ENCODE measurements at regions of chr10 and their contacts with region 1.

Region 1: GRCh38 chr10:89414146-89414878 is at the start of gene IFIT5:
- DNase-seq: peak; percentile 58
- ATAC-seq: peak; percentile 84
- H3K4me3 ChIP-seq: peak within 1 kb of the TSS; percentile 79
- H3K27ac ChIP-seq: peak within 1 kb of the TSS; percentile 97
- H3K4me1 ChIP-seq: no peaks in the 10 kb centered on the region
- H3K27me3 ChIP-seq: no peaks in the 10 kb centered on the region
- CTCF ChIP-seq: no peak
- EP300 ChIP-seq: no peak
- POLR2A ChIP-seq: peak; percentile 57
- RAD21 ChIP-seq: no peak
- polyA plus RNA-seq, gene IFIT5: 5.9 to 8.3 TPM

Region 2: DNA sequence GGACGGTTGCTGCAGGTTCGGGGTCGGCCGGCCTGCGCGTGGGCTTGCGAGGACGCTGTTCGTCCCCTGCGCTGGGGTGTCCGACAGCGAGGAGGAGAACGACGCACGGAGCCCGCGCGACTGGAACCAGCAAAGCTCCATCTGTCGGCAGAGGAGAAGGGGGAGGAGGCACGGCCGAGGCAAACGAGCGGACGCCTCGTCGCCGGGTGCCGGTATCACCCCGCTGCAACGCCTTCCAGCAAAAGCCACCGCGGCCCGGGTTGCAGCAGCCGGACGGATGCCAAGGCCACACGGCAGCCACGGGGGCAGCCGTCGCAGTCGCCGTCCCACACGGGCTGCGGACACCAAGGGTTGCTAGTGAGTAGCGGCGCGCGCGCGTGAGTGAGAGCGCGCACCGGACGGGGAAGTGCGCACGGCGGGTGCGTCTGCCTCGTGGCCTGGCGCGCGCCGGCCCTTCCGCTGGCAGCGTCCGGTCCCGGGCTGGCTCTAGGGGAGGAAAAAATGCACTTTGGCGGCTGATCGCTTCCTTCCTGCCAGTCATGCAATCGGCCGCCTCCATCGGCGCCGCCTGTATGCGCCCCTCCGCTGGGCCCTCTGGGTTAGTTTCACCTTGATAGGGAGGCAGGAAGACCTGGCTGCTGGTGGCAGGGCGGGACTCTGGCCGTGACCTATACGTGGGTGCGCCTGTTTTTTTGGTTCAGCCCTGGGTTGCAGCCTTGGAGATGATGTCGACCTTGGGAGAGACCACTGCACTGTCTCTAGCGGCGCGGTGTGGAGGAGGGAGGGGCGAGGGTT is 533.8 kb before region 1 on chr10:
- CTCF ChIA-PET with region 1: no interaction called
- POLR2A ChIA-PET with region 1: no interaction called
- RAD21 ChIA-PET with region 1: no interaction called
- SMC1A ChIA-PET with region 1: no interaction called
- in situ Hi-C with region 1: no loop called
- intact Hi-C with region 1: loop called (anchors 10 kb)
- DNase-seq: peak; percentile 70
- ATAC-seq: peak; percentile 84
- H3K4me3 ChIP-seq: peak overlapping the region; percentile 89
- H3K27ac ChIP-seq: peak overlapping the region; percentile 82
- H3K4me1 ChIP-seq: peaks cover 20% of the 10 kb centered on the region
- H3K27me3 ChIP-seq: no peaks in the 10 kb centered on the region
- CTCF ChIP-seq: peak in 2 of 3 experiments; percentile 22 to 23; a peak in 3 of 6 replicates
- EP300 ChIP-seq: 0 out of 4 replicates have a peak, but pooled peaks of 1 of the 2 experiments have one; percentile 36
- POLR2A ChIP-seq: peak; percentile 96
- RAD21 ChIP-seq: 0 out of 2 replicates have a peak, but pooled peaks have one; percentile 5

Region 3: DNA sequence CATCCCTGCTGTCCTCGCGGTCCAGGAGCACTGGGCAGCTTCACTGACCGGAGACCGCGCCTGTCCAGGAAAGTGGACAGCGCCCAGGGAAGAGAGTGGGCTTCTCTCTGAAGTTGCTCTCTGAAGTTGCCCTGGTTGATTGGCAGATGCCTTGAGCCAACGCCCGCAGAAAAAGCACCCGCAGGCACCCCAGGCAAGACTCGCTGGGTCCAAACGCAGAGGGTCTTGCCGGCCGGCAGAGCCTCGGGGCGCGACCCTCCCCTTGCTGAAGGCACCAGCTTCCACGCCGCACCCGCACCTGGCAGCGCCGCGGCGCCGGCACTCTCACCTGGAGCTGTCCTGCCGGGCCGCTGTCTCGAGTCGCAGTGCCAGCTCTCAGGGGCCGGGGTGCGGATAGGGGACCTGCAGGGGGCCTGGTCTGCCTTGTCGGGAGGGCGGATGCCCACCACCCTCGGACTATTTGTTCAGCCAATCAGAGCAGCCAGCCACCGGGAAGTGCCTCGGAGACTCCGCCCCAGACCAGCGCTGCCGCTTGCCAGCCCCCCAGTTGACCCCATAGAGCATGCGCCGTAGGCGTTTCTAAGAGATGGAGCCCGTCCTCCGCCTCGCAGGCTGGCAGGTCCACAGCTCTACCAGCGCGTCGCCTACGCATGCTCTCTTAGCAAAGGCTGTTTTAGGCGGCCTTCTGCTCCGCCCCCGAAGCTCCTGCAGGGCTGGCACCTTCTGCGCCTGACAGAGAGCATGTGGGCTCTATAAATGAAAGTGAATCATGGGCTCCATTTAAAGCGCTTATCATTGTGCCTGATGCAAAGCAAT is 162.7 kb before region 1 on chr10 and contains the start of gene LIPA:
- CTCF ChIA-PET with region 1: interaction called, 8 read pairs
- POLR2A ChIA-PET with region 1: interaction called, 7 read pairs
- RAD21 ChIA-PET with region 1: interaction called, 6 read pairs
- SMC1A ChIA-PET with region 1: interaction called, 10 read pairs
- in situ Hi-C with region 1: no loop called
- intact Hi-C with region 1: no loop called
- DNase-seq: peak; percentile 95
- ATAC-seq: peak; percentile 97
- H3K4me3 ChIP-seq: peak within 1 kb of the TSS; percentile 84
- H3K27ac ChIP-seq: peak within 1 kb of the TSS; percentile 69
- H3K4me1 ChIP-seq: 0 out of 2 replicates have a peak, but pooled peaks cover 6% of the 10 kb centered on the region
- H3K27me3 ChIP-seq: no peaks in the 10 kb centered on the region
- CTCF ChIP-seq: no peak
- EP300 ChIP-seq: no peak
- POLR2A ChIP-seq: peak; percentile 84
- RAD21 ChIP-seq: no peak
- polyA plus RNA-seq, gene LIPA: 36.0 to 45.2 TPM

Measured in GM12878 (cell line).